ENCODE measurements at regions of chr3 and their contacts with region 1.

Region 1: DNA sequence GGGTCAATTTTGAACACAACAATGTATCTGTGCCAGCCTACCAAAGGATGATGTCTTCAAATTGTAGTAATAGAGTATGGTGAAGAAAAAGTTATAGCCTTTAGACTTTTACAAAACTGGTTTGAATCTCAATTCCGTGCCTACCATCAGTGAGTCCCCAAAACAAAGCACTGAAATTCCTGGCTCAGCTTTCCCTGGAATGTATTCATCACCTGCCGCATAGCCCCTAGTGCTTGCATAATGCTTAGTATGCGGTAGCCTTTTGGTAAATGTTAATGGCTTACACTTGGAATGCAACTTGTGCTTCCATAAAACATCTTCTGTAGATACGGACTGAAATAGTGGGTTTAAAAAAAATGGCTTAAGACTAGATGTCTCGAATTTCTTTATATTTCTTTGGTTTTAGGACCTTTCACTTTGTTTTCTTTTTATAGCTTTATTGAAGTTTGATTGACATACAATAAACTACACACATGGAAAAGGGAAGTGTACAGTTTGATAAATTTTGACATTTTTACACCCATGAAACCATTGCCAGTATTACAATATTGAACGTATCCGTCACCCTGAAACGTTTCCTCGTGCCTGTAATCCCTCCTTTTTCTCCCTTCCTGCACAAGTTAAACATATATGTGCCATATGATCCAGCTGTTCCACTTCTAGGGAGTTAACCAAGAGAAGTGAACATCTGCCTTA is 12.1 kb downstream of the SACM1L start:
- DNase-seq: no peak
- CTCF ChIP-seq: no peak

Region 2: GRCh38 chr3:45688882-45689756 is 12.2 kb before region 1 on chr3 and contains the start of gene SACM1L:
- CTCF ChIA-PET with region 1: interaction called, 29 read pairs
- POLR2A ChIA-PET with region 1: interaction called, 3 read pairs
- DNase-seq: peak; percentile 90
- CTCF ChIP-seq: no peak

Region 3: DNA sequence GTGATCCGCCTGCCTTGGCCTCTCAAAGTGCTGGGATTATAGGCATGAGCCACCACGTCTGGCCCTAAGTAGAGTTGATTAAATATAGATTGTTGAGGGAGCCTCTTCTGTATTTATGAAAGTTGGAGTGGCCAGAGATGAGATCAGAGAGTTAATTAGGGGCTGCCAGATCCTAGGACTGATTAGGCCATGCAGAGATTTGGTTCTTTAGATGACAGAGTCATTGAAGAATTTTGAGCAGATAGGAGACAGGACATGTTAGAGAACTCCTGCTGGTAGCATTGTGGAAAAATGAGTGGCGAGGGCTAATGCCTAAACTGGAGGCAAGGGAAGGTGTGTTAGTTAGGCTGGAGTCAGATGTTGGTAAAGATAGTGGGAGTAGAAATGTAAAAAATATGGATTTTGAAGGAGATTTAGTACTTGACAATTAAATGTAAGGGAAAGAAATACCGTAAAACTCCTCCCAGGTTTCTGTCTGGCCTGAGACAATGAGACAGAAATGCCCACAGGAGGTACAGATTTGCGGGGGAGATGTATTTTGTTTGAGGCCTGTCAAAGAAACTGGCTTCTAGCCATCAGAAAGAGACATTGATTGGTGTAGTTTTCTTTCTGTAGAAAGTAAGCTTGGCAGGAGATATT is 11.3 kb after region 1 on chr3:
- CTCF ChIA-PET with region 1: interaction called, 20 read pairs
- POLR2A ChIA-PET with region 1: no interaction called
- DNase-seq: no peak
- CTCF ChIP-seq: no peak

Measured in GM10248 (cell line).